Activated CD8-positive, alpha-beta T cell treated with anti-CD3 and anti-CD28 coated beads for 36 hours (primary cell): ENCODE measurements at regions of chr11 and their contacts with region 1.

Region 1: DNA sequence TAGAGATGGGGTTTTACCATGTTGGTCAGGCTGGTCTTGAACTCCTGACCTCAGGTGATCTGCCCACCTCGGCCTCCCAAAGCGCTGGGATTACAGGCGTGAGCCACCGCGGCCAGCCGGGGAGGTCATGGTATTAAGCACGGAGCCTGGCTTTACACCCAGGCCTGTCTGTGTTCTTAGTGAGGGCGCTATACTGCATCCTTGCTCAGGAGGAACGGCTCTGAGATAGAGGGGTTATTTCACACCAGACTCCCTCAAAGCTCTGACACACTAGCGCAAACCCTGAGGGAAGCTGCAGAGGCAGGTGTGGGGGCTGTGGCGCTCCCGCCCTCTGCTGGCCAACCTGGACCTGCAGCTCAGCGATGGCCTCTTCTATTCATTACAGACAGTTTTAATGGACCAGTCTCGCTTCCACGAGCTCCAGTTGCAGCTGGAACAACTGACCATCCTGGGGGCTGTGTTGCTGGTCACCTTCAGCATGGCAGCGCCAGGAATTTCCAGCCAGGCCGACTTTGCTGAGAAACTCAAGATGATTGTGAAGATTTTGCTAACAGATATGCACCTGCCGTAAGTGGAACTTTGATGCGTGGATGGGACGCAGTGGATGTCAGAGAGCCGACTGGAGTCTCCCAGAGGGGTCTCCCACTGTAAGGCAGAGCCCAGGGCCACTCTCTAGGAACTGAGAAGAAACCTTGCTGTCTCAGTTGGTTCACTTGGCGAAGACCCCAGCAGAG is 26.2 kb downstream of the TCP11L1 start:
- DNase-seq: peak; percentile 84
- ATAC-seq: peak; percentile 82
- H3K4me3 Mint-ChIP-seq: no peak overlapping the region
- H3K27ac Mint-ChIP-seq: no peak overlapping the region
- H3K4me1 Mint-ChIP-seq: peaks cover 42% of the 10 kb centered on the region
- H3K27me3 Mint-ChIP-seq: no peaks in the 10 kb centered on the region
- CTCF ChIP-seq: peak; percentile 94

Region 2: DNA sequence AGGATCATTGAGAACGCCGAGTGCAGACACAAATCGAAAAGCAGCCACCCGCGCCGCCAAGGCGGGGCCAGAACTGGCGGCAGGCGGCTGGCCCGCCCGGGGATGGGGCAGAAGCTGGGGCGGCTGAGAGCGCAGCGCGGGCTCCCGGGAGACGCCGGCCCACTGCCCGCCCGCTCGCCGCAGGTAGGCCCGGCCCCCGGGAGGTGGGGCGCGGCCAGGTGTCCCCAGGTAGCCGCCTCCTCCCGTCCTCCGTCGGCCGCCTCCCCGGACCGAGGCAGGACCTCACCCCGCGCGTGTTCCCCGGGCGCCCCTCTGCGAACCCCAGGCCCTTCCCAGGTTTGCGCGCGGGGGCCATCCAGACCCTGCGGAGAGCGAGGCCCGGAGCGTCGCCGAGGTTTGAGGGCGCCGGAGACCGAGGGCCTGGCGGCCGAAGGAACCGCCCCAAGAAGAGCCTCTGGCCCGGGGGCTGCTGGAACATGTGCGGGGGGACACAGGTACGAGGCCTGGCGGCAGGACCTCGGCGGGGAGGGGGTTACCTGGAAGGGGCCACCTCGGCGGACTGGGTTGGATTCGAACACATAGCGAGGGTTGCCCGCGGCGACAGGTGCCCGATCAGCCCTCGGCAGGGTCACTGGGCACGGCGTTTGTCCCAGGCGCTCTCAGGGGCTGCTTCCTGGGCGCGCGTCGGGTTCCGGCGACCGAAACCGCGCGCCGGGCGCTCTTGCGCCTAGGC is 235.8 kb before region 1 on chr11 and contains the start of gene PRRG4:
- CTCF ChIA-PET with region 1: no interaction called
- POLR2A ChIA-PET with region 1: no interaction called
- intact Hi-C with region 1: loop called (anchors 10 kb)
- DNase-seq: peak; percentile 63
- ATAC-seq: peak; percentile 86
- H3K4me3 Mint-ChIP-seq: peak within 1 kb of the TSS; percentile 86
- H3K27ac Mint-ChIP-seq: peak within 1 kb of the TSS; percentile 85
- H3K4me1 Mint-ChIP-seq: peaks cover 4% of the 10 kb centered on the region
- H3K27me3 Mint-ChIP-seq: peaks cover 25% of the 10 kb centered on the region
- CTCF ChIP-seq: no peak
- total RNA-seq, gene PRRG4: 0.27 to 0.34 TPM

Region 3: GRCh38 chr11:32893343-32894148 is 172.1 kb before region 1 on chr11:
- CTCF ChIA-PET with region 1: interaction called, 25 read pairs
- POLR2A ChIA-PET with region 1: interaction called, 3 read pairs
- intact Hi-C with region 1: loop called (anchors 10 kb)
- DNase-seq: peak; percentile 70
- ATAC-seq: peak; percentile 64
- H3K4me3 Mint-ChIP-seq: peak overlapping the region; percentile 83
- H3K27ac Mint-ChIP-seq: peak overlapping the region; percentile 98
- H3K4me1 Mint-ChIP-seq: peaks cover 38% of the 10 kb centered on the region
- H3K27me3 Mint-ChIP-seq: no peaks in the 10 kb centered on the region
- CTCF ChIP-seq: peak; percentile 27

Region 4: DNA sequence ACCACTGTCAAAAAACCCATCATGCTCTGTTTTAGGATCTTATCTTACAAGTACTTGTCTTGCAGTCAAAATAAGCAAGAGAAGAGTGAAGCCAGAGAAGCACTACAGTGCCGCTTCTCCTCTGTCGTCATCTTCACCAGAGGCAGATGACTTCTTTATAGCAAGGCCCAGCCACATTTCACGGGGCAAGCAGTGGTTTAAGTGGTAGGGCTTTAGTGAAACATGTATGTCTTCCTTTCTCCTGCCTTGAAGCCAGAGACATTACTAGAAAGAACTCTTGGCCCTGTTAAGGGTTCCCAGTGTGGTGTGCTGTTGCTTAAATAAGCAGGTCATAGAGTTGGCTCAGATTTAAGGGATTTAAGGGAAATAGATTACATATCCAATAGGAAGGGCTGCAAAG is 92.8 kb before region 1 on chr11:
- CTCF ChIA-PET with region 1: interaction called, 80 read pairs
- POLR2A ChIA-PET with region 1: no interaction called
- intact Hi-C with region 1: no loop called
- DNase-seq: no peak
- ATAC-seq: no peak
- H3K4me3 Mint-ChIP-seq: no peak overlapping the region
- H3K27ac Mint-ChIP-seq: no peak overlapping the region
- H3K4me1 Mint-ChIP-seq: no peaks in the 10 kb centered on the region
- H3K27me3 Mint-ChIP-seq: no peaks in the 10 kb centered on the region
- CTCF ChIP-seq: no peak

Region 5: GRCh38 chr11:33015621-33016551 is 49.7 kb before region 1 on chr11 and contains the start of gene DEPDC7:
- CTCF ChIA-PET with region 1: interaction called, 9 read pairs
- POLR2A ChIA-PET with region 1: interaction called, 3 read pairs
- intact Hi-C with region 1: loop called (anchors 2 kb)
- DNase-seq: peak; percentile 92
- ATAC-seq: peak; percentile 76
- H3K4me3 Mint-ChIP-seq: peak within 1 kb of the TSS; percentile 78
- H3K27ac Mint-ChIP-seq: peak within 1 kb of the TSS; percentile 52
- H3K4me1 Mint-ChIP-seq: peaks cover 41% of the 10 kb centered on the region
- H3K27me3 Mint-ChIP-seq: peaks cover 16% of the 10 kb centered on the region
- CTCF ChIP-seq: no peak
- total RNA-seq, gene DEPDC7: 2.8 to 3.0 TPM

Region 6: GRCh38 chr11:33039274-33040032 is 26.2 kb before region 1 on chr11 and contains the start of gene TCP11L1:
- CTCF ChIA-PET with region 1: interaction called, 9 read pairs
- POLR2A ChIA-PET with region 1: interaction called, 26 read pairs
- intact Hi-C with region 1: no loop called
- DNase-seq: peak; percentile 86
- ATAC-seq: peak; percentile 75
- H3K4me3 Mint-ChIP-seq: peak within 1 kb of the TSS; percentile 87
- H3K27ac Mint-ChIP-seq: peak within 1 kb of the TSS; percentile 97
- H3K4me1 Mint-ChIP-seq: peaks cover 25% of the 10 kb centered on the region
- H3K27me3 Mint-ChIP-seq: peaks cover 1% of the 10 kb centered on the region
- CTCF ChIP-seq: no peak
- total RNA-seq, gene TCP11L1: 11.0 to 12.7 TPM